Naive thymus-derived CD4-positive, alpha-beta T cell (primary cell): ENCODE measurements at regions of chr17 and their contacts with region 1.

Region 1: DNA sequence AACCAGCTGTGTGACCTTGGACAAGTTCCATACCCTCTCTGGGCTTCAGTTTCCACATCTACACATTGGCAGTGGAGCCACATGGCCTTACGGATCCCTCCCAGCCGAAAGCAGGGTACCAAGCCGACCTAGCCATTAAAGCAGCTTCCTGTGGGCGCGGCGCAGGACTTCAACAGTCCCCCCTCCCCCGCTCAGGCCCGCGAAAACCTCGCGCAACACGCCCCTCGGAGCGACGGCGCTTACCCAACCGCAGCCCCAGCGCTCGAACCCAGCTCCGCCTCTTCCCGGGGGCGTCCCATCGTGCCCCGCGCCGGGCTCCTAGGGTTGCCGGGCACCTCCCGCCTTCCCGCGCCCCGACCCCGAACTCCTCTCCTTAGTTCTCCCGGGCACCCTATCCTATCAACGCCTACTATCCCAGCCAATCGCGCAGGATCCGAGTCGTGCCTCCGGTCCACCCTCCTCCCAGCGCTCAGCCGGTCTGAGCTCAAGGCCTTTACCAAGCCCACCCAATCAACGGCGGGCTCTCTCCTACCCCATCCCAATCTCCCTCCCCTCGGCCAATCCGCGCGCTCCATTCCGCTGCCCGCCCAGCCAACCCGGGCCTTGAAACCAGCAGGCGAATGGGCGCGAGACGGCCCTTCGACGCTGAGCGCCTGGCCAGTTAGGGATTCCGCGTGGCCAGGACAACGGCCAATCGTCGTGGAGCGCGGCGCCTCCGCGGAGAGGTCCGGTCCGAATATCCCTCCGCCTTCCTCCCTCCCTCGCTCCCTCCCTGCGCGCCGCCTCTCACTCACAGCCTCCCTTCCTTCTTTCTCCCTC is at the start of gene KPNB1:
- DNase-seq: peak; percentile 85 to 97 (median 97)
- ATAC-seq: peak; percentile 90
- H3K4me3 ChIP-seq: peak within 1 kb of the TSS; percentile 55
- H3K4me3 Mint-ChIP-seq: peak within 1 kb of the TSS; percentile 92 to 100 (median 99)
- H3K27ac ChIP-seq: peak within 1 kb of the TSS; percentile 80
- H3K27ac Mint-ChIP-seq: peak within 1 kb of the TSS; percentile 92 to 100 (median 98)
- H3K4me1 ChIP-seq: peaks cover 26 to 34% of the 10 kb centered on the region in 2 donors
- H3K4me1 Mint-ChIP-seq: peaks cover 40 to 67% (median 53%) of the 10 kb centered on the region in 7 donors
- H3K27me3 ChIP-seq: no peaks in the 10 kb centered on the region
- H3K27me3 Mint-ChIP-seq: no peaks in the 10 kb centered on the region
- total RNA-seq, gene KPNB1: 185 to 465 (median 255) TPM

Region 2: GRCh38 chr17:47162013-47162622 is 487.2 kb before region 1 on chr17:
- CTCF ChIA-PET with region 1: no interaction called
- POLR2A ChIA-PET with region 1: no interaction called
- intact Hi-C with region 1: no loop called
- DNase-seq: no peak
- ATAC-seq: no peak
- H3K4me3 ChIP-seq: no peak overlapping the region
- H3K4me3 Mint-ChIP-seq: peak overlapping the region in 8 of 10 donors; percentile 3 to 68 (median 24)
- H3K27ac ChIP-seq: no peak overlapping the region
- H3K27ac Mint-ChIP-seq: peak overlapping the region; percentile 8 to 64 (median 39)
- H3K4me1 ChIP-seq: no peaks in the 10 kb centered on the region
- H3K4me1 Mint-ChIP-seq: peaks cover 11 to 21% (median 15%) of the 10 kb centered on the region in 7 donors
- H3K27me3 ChIP-seq: no peaks in the 10 kb centered on the region
- H3K27me3 Mint-ChIP-seq: no peaks in the 10 kb centered on the region

Region 3: GRCh38 chr17:47323382-47324222 is 325.8 kb before region 1 on chr17 and contains the start of gene EFCAB13:
- CTCF ChIA-PET with region 1: no interaction called
- POLR2A ChIA-PET with region 1: interaction called, 6 read pairs
- intact Hi-C with region 1: loop called in 1 of 2 experiments (anchors 1 kb)
- DNase-seq: peak; percentile 55 to 84 (median 73)
- ATAC-seq: peak; percentile 91
- H3K4me3 ChIP-seq: peak within 1 kb of the TSS; percentile 93
- H3K4me3 Mint-ChIP-seq: peak within 1 kb of the TSS; percentile 92 to 100 (median 98)
- H3K27ac ChIP-seq: peak within 1 kb of the TSS; percentile 76
- H3K27ac Mint-ChIP-seq: peak within 1 kb of the TSS; percentile 91 to 99 (median 98)
- H3K4me1 ChIP-seq: peaks cover 0 to 3% of the 10 kb centered on the region in 2 donors
- H3K4me1 Mint-ChIP-seq: peaks cover 13 to 26% (median 22%) of the 10 kb centered on the region in 7 donors
- H3K27me3 ChIP-seq: no peaks in the 10 kb centered on the region
- H3K27me3 Mint-ChIP-seq: peaks cover 0 to 28% (median 0%) of the 10 kb centered on the region in 5 donors
- total RNA-seq, gene EFCAB13: 3.7 to 37.4 (median 19.9) TPM

Region 4: GRCh38 chr17:47698749-47699535 is 49.6 kb after region 1 on chr17:
- CTCF ChIA-PET with region 1: interaction called, 3 read pairs
- POLR2A ChIA-PET with region 1: no interaction called
- intact Hi-C with region 1: loop called in 1 of 2 experiments (anchors 2 kb)
- DNase-seq: peak; percentile 34 to 82 (median 63)
- ATAC-seq: peak; percentile 70
- H3K4me3 ChIP-seq: no peak overlapping the region
- H3K4me3 Mint-ChIP-seq: peak overlapping the region in 1 of 10 donors; percentile 29
- H3K27ac ChIP-seq: no peak overlapping the region
- H3K27ac Mint-ChIP-seq: peak overlapping the region in 2 of 9 donors; percentile 38 to 78
- H3K4me1 ChIP-seq: peaks cover 17 to 43% of the 10 kb centered on the region in 2 donors
- H3K4me1 Mint-ChIP-seq: peaks cover 19 to 54% (median 27%) of the 10 kb centered on the region in 7 donors
- H3K27me3 ChIP-seq: no peaks in the 10 kb centered on the region
- H3K27me3 Mint-ChIP-seq: peaks cover 0 to 3% (median 0%) of the 10 kb centered on the region in 5 donors

Region 5: GRCh38 chr17:47941236-47941994 is 292.1 kb after region 1 on chr17 and contains the start of gene PNPO:
- CTCF ChIA-PET with region 1: no interaction called
- POLR2A ChIA-PET with region 1: no interaction called
- intact Hi-C with region 1: loop called in 1 of 2 experiments (anchors 1 kb)
- DNase-seq: peak; percentile 66 to 96 (median 94)
- ATAC-seq: peak; percentile 99
- H3K4me3 ChIP-seq: peak within 1 kb of the TSS; percentile 75
- H3K4me3 Mint-ChIP-seq: peak within 1 kb of the TSS; percentile 75 to 96 (median 88)
- H3K27ac ChIP-seq: peak within 1 kb of the TSS; percentile 90
- H3K27ac Mint-ChIP-seq: peak within 1 kb of the TSS; percentile 34 to 95 (median 86)
- H3K4me1 ChIP-seq: peaks cover 21 to 33% of the 10 kb centered on the region in 2 donors
- H3K4me1 Mint-ChIP-seq: peaks cover 35 to 63% (median 47%) of the 10 kb centered on the region in 7 donors
- H3K27me3 ChIP-seq: no peaks in the 10 kb centered on the region
- H3K27me3 Mint-ChIP-seq: no peaks in the 10 kb centered on the region
- total RNA-seq, gene PNPO: 12.0 to 35.7 (median 14.1) TPM

Region 6: DNA sequence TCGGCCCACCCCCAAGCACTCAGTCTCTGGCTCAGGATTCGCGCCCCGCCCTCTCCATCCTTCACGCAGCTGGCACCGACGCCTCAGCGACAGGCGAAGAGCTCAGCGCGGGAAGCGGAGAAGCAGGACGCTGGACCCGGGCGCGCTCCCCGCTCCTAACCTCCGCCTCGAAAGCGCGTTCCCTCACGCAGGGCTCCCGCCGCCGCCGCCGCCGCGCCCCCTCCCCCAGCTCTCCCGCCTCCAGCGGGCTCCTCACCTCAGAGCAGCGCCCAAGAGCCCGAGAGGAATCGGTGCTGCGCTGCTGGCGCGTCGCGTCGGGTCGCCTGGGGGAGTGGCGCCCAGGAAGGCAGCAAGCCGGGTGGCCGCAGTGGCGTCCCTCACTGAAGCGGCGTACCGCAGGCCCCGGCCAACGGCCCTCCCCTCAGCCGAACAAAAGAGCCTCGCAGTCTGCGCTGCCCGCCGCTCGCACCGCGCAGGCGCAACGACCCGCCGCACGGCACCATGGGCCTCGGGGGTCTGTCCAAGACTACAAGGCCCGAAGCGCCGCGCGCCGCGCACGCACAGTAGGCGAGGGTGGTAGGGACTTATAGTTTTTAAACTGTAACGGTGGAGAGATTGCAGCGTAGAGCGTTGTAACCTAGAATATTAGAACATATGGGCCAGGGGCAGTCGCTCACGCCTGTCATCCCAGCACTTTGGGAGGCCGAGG is 451.8 kb after region 1 on chr17 and contains the start of gene CBX1:
- CTCF ChIA-PET with region 1: no interaction called
- POLR2A ChIA-PET with region 1: no interaction called
- intact Hi-C with region 1: loop called in 1 of 2 experiments (anchors 2 kb)
- DNase-seq: peak; percentile 87 to 95 (median 93)
- ATAC-seq: peak; percentile 98
- H3K4me3 ChIP-seq: peak within 1 kb of the TSS; percentile 78
- H3K4me3 Mint-ChIP-seq: peak within 1 kb of the TSS; percentile 83 to 95 (median 91)
- H3K27ac ChIP-seq: peak within 1 kb of the TSS; percentile 68
- H3K27ac Mint-ChIP-seq: peak within 1 kb of the TSS; percentile 78 to 94 (median 89)
- H3K4me1 ChIP-seq: peaks cover 6 to 11% of the 10 kb centered on the region in 2 donors
- H3K4me1 Mint-ChIP-seq: peaks cover 17 to 60% (median 54%) of the 10 kb centered on the region in 7 donors
- H3K27me3 ChIP-seq: no peaks in the 10 kb centered on the region
- H3K27me3 Mint-ChIP-seq: no peaks in the 10 kb centered on the region
- total RNA-seq, gene CBX1: 16.4 to 56.7 (median 33.5) TPM